CD8-positive, alpha-beta memory T cell (primary cell): ENCODE measurements at regions of chr7 and their contacts with region 1.

Region 1: GRCh38 chr7:129367700-129368388 is 66.4 kb upstream of the STRIP2 start:
- DNase-seq: peak; percentile 47 to 74 (median 54)
- H3K4me3 ChIP-seq: no peak overlapping the region
- H3K4me3 Mint-ChIP-seq: peak overlapping the region; percentile 16 to 76 (median 69)
- H3K27ac ChIP-seq: no peak overlapping the region
- H3K27ac Mint-ChIP-seq: peak overlapping the region in 5 of 8 donors; percentile 4 to 72 (median 33)
- H3K4me1 ChIP-seq: peaks cover 7% of the 10 kb centered on the region
- H3K4me1 Mint-ChIP-seq: peaks cover 14 to 16% (median 16%) of the 10 kb centered on the region in 3 donors
- H3K27me3 ChIP-seq: no peaks in the 10 kb centered on the region
- H3K27me3 Mint-ChIP-seq: no peaks in the 10 kb centered on the region

Region 2: DNA sequence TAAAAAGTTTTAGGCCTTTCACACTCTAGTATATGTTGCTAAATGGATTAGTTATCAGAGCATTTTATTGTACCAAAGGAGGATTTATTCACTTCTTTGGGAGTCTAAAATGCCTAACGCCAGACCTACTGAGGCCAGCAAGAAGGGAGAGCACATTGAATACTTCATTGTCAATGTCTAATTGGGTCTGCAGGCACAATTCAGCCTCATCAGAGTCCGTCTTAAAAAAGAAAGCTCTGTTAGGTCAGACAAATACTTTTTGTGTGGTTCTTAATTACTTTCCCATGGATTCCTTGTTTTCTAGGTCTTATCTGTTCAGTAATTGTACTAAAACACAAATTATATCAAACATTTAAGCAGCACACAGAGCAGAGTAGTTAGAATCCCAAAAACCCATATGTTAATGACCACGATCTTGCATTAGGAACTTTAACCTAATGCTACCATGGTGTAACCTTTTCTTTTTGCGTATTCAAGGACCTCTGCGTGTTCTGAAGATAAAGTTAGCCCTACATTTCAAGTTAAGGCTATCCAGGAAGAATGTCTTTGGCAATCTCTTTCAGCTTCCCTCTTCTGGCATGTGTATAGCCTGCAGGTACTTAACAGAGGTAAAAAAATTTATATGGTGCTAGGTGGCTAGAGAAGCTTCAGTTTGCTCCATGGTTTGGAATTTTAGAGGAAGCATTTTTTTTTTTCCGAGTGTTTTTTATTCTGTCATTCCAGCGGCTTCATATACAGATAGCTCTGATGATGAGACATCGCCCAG is 20.7 kb after region 1 on chr7:
- CTCF ChIA-PET with region 1: interaction called, 10 read pairs
- POLR2A ChIA-PET with region 1: no interaction called
- DNase-seq: no peak
- H3K4me3 ChIP-seq: no peak overlapping the region
- H3K4me3 Mint-ChIP-seq: no peak overlapping the region
- H3K27ac ChIP-seq: no peak overlapping the region
- H3K27ac Mint-ChIP-seq: no peak overlapping the region
- H3K4me1 ChIP-seq: no peaks in the 10 kb centered on the region
- H3K4me1 Mint-ChIP-seq: no peaks in the 10 kb centered on the region
- H3K27me3 ChIP-seq: no peaks in the 10 kb centered on the region
- H3K27me3 Mint-ChIP-seq: no peaks in the 10 kb centered on the region

Region 3: GRCh38 chr7:129468087-129468486 is 100.2 kb after region 1 on chr7:
- CTCF ChIA-PET with region 1: interaction called, 48 read pairs
- POLR2A ChIA-PET with region 1: no interaction called
- DNase-seq: no peak
- H3K4me3 ChIP-seq: no peak overlapping the region
- H3K4me3 Mint-ChIP-seq: peak overlapping the region in 2 of 7 donors; percentile 4 to 13
- H3K27ac ChIP-seq: no peak overlapping the region
- H3K27ac Mint-ChIP-seq: peak overlapping the region in 4 of 8 donors; percentile 43 to 87 (median 56)
- H3K4me1 ChIP-seq: no peaks in the 10 kb centered on the region
- H3K4me1 Mint-ChIP-seq: peaks cover 0 to 8% (median 0%) of the 10 kb centered on the region in 3 donors
- H3K27me3 ChIP-seq: no peaks in the 10 kb centered on the region
- H3K27me3 Mint-ChIP-seq: no peaks in the 10 kb centered on the region

Region 4: DNA sequence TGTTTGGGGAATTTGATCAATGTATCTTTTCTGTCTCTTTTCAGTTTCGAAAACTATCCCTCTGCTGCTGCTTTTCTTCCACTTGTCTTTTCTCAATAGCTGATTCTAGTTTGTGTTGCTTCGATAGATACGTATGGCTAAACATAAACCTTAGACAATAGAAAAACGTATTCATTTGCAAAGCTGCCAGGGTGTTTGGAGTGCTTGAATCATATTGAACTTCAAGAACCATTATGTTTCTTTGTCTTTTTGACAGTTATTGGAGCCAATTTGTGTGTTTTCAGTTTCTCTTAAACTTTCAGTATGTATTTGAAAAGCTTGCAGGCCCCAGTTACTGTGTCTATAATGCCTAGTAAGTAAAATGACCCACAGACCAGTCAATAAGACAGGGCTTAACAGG is 268.8 kb after region 1 on chr7:
- CTCF ChIA-PET with region 1: interaction called, 12 read pairs
- POLR2A ChIA-PET with region 1: no interaction called
- DNase-seq: no peak
- H3K4me3 ChIP-seq: no peak overlapping the region
- H3K4me3 Mint-ChIP-seq: no peak overlapping the region
- H3K27ac ChIP-seq: no peak overlapping the region
- H3K27ac Mint-ChIP-seq: peak overlapping the region in 4 of 8 donors; percentile 9 to 47 (median 22)
- H3K4me1 ChIP-seq: peaks cover 12% of the 10 kb centered on the region
- H3K4me1 Mint-ChIP-seq: peaks cover 42 to 56% (median 54%) of the 10 kb centered on the region in 3 donors
- H3K27me3 ChIP-seq: no peaks in the 10 kb centered on the region
- H3K27me3 Mint-ChIP-seq: no peaks in the 10 kb centered on the region